ENCODE measurements at regions of chr12 and their contacts with region 1.

Region 1: DNA sequence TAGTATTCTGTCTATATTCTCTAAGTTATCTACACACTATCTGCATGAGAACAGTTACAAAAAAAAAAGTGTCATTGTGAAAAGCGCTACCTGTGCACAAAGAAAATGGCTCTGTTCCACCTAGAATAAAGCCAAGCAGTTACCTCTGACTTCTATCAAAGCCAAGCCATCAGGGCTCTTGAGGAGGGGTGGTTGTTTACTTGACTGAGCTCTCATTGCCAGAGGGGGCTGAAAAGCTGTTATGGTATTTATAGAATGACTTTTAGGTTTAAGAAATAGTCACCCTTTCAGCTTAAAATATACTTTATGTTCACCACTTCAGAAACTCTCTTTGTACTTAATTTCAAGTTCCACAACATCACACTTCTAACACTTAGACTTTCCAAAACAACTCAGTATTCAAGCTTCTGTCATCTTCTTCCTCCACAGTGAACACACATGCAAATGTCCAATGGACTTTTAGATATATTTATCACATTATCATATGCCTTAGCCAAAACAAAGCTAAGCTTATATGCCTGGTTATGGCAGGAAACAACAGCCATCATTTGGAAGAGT is 7.5 kb downstream of the ITPR2 start:
- DNase-seq: no peak
- H3K4me3 ChIP-seq: no peak overlapping the region
- H3K27ac ChIP-seq: no peak overlapping the region
- H3K4me1 ChIP-seq: peaks cover 3% of the 10 kb centered on the region
- H3K27me3 ChIP-seq: no peaks in the 10 kb centered on the region
- CTCF ChIP-seq: no peak

Region 2: GRCh38 chr12:26748741-26749431 is 76.7 kb before region 1 on chr12:
- CTCF ChIA-PET with region 1: no interaction called
- POLR2A ChIA-PET with region 1: no interaction called
- intact Hi-C with region 1: loop called (anchors 5 kb)
- DNase-seq: peak; percentile 94
- H3K4me3 ChIP-seq: peak overlapping the region; percentile 18
- H3K27ac ChIP-seq: peak overlapping the region; percentile 49
- H3K4me1 ChIP-seq: peaks cover 52% of the 10 kb centered on the region
- H3K27me3 ChIP-seq: no peaks in the 10 kb centered on the region
- CTCF ChIP-seq: no peak